A549 (cell line): ENCODE measurements at regions of chr10 and their contacts with region 1.

Region 1: DNA sequence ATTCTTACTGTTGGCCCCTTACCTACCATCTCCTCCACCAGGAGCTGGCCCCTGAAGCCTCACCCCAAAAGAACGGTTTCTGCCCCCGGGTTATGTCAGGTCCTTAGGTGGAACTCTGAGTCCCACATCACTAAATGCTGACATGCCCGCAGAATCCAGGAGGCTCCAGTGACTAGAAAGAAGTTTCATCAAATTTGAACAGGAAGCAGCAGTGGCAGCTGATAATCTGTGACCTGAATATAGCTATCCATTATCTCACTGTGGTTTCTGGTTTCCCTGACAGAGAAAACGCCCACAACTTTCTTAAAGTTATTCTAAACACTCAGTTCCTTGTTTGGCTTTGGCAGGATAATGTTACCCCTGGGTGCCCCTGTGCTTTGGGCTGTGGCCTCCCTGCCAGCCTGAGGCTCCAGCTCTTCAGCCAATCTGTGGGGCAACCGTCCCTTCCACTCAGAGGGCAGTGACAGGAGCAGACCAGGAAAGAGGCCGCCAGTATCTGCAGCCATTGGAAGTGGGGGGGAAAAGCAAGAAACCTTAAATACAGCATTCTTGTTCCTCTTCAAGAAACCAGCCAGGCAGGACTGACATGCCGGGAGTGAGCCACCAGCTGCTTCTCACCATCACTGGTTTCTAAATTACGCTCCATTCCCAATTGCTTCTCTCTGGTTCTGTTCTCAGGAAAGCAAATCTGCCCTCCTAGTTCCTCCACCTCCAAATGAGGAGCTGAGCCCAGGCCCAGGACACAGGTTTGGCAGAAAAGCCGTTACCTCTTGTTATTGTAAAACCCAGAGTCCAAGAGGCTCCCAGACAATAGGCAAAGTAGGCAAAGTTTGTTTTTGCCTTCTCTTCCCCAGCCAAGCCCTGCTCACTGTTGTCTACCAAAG is 41.2 kb upstream of the VCL start:
- DNase-seq: no peak
- ATAC-seq: peak; percentile 26 to 57; a peak in 3 of 6 replicates
- H3K4me3 ChIP-seq: no peak overlapping the region
- H3K27ac ChIP-seq: peak overlapping the region; percentile 29 to 30; a peak in 4 of 6 replicates
- H3K4me1 ChIP-seq: peaks cover 13% of the 10 kb centered on the region; the same call in 2 of the 3 replicates
- CTCF ChIP-seq: no peak
- EP300 ChIP-seq: no peak
- POLR2A ChIP-seq: no peak
- RAD21 ChIP-seq: no peak

Region 2: GRCh38 chr10:73926152-73926764 is 30.5 kb before region 1 on chr10:
- CTCF ChIA-PET with region 1: interaction called, 12 read pairs
- POLR2A ChIA-PET with region 1: no interaction called
- DNase-seq: no peak
- ATAC-seq: no peak
- H3K4me3 ChIP-seq: no peak overlapping the region
- H3K27ac ChIP-seq: no peak overlapping the region
- H3K4me1 ChIP-seq: no peaks in the 10 kb centered on the region
- CTCF ChIP-seq: no peak
- EP300 ChIP-seq: no peak
- POLR2A ChIP-seq: no peak
- RAD21 ChIP-seq: no peak

Region 3: GRCh38 chr10:73946253-73947155 is 10.2 kb before region 1 on chr10:
- CTCF ChIA-PET with region 1: interaction called, 52 read pairs
- POLR2A ChIA-PET with region 1: no interaction called
- DNase-seq: no peak
- ATAC-seq: peak; percentile 43 to 51; a peak in 4 of 6 replicates
- H3K4me3 ChIP-seq: no peak overlapping the region
- H3K27ac ChIP-seq: no peak overlapping the region
- H3K4me1 ChIP-seq: peaks cover under 1% of the 10 kb centered on the region; the same call in 1 of the 3 replicates
- CTCF ChIP-seq: peak; percentile 20; the same call in 1 of the 3 replicates
- EP300 ChIP-seq: no peak
- POLR2A ChIP-seq: no peak
- RAD21 ChIP-seq: 0 out of 5 replicates have a peak, but pooled peaks of 1 of the 2 experiments have one; percentile 16

Region 4: DNA sequence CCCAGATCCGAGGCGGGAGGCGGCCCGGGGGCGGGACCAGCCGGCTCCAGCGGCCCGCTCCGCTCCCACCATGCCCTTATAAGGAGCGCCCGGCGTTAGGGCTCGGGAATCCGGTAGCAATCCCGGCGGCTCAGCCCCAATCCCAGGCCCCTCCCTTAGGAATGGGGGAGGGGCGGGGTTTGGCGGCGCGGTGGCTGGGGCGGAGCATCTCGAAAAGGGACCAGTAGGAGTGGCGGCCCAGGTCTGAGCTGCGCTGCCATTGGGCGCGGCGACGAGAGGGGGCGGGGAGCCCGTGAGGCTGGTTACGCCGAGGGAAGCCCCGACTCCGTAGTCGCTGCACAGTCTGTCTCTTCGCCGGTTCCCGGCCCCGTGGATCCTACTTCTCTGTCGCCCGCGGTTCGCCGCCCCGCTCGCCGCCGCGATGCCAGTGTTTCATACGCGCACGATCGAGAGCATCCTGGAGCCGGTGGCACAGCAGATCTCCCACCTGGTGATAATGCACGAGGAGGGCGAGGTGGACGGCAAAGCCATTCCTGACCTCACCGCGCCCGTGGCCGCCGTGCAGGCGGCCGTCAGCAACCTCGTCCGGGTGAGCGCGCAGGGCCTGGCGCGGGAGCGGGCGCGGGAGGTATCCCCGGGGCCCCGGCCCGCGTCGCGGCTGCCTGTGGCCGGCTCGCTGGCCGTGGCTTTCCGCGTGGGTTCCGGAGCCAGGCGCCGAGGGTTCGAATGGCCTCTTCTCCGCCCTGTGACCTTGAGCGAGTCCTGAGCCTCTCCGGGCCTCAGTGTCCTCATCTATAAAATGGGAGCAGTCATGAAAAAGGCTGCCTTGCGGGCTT is 41.3 kb after region 1 on chr10 and contains the start of gene VCL:
- CTCF ChIA-PET with region 1: interaction called, 10 read pairs
- POLR2A ChIA-PET with region 1: interaction called, 5 read pairs
- DNase-seq: peak; percentile 86 to 98
- ATAC-seq: peak; percentile 94 to 95
- H3K4me3 ChIP-seq: peak within 1 kb of the TSS; percentile 97
- H3K27ac ChIP-seq: peak within 1 kb of the TSS; percentile 95
- H3K4me1 ChIP-seq: peaks cover 36% of the 10 kb centered on the region
- CTCF ChIP-seq: no peak
- EP300 ChIP-seq: no peak
- POLR2A ChIP-seq: peak; percentile 99
- RAD21 ChIP-seq: 0 out of 5 replicates have a peak, but pooled peaks of 1 of the 2 experiments have one; percentile 16
- polyA plus RNA-seq, gene VCL: 101 and 112 TPM in 2 replicates

Region 5: GRCh38 chr10:74096777-74097176 is 140.1 kb after region 1 on chr10:
- CTCF ChIA-PET with region 1: no interaction called
- POLR2A ChIA-PET with region 1: no interaction called
- DNase-seq: no peak
- ATAC-seq: no peak
- H3K4me3 ChIP-seq: no peak overlapping the region
- H3K27ac ChIP-seq: no peak overlapping the region
- H3K4me1 ChIP-seq: peaks cover 9% of the 10 kb centered on the region; the same call in 2 of the 3 replicates
- CTCF ChIP-seq: no peak
- EP300 ChIP-seq: no peak
- POLR2A ChIP-seq: no peak
- RAD21 ChIP-seq: no peak

Region 6: DNA sequence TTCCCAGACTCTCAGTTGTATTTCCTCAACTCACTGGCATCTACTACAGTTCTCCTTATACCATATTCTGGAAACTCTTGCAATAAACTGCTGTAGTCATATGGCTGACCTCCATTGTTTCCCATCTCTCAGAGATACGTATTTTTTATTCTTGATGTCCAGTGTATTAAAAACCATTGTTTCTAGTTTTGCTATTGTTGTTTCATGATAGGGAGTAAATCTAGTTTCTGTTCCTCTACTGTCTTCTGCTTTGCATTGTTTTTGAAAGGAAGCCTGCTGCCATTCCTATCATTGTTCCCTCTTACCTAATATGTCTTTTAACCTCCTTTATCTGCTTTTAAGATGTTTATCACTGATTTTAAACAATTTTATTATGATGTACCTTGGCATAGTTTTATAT is 449.3 kb after region 1 on chr10:
- CTCF ChIA-PET with region 1: no interaction called
- POLR2A ChIA-PET with region 1: no interaction called
- DNase-seq: no peak
- ATAC-seq: no peak
- H3K4me3 ChIP-seq: no peak overlapping the region
- H3K27ac ChIP-seq: no peak overlapping the region
- H3K4me1 ChIP-seq: no peaks in the 10 kb centered on the region
- CTCF ChIP-seq: no peak
- EP300 ChIP-seq: no peak
- POLR2A ChIP-seq: no peak
- RAD21 ChIP-seq: no peak